CD4-positive, alpha-beta T cell (primary cell): ENCODE measurements at regions of chr1 and their contacts with region 1.

Region 1: GRCh38 chr1:228500901-228501871 is 14.0 kb downstream of the RNF187 start:
- DNase-seq: peak; percentile 78 to 94 (median 83)
- ATAC-seq: peak; percentile 99
- H3K4me3 ChIP-seq: peak overlapping the region; percentile 28
- H3K4me3 Mint-ChIP-seq: peak overlapping the region; percentile 84
- H3K27ac ChIP-seq: no peak overlapping the region
- H3K27ac Mint-ChIP-seq: peak overlapping the region; percentile 55
- H3K4me1 ChIP-seq: peaks cover 19% of the 10 kb centered on the region
- H3K4me1 Mint-ChIP-seq: peaks cover 20% of the 10 kb centered on the region
- H3K27me3 ChIP-seq: peaks cover 0 to 3% of the 10 kb centered on the region in 2 experiments
- H3K27me3 Mint-ChIP-seq: no peaks in the 10 kb centered on the region
- CTCF ChIP-seq: peak; percentile 97

Region 2: GRCh38 chr1:228087771-228088251 is 413.4 kb before region 1 on chr1:
- CTCF ChIA-PET with region 1: no interaction called
- POLR2A ChIA-PET with region 1: no interaction called
- intact Hi-C with region 1: loop called in 1 of 2 experiments (anchors 5 kb)
- DNase-seq: peak in 5 of 14 experiments; percentile 31 to 62 (median 45)
- ATAC-seq: peak; percentile 18
- H3K4me3 ChIP-seq: peak overlapping the region; percentile 5
- H3K4me3 Mint-ChIP-seq: peak overlapping the region; percentile 79
- H3K27ac ChIP-seq: peak overlapping the region in 1 of 2 donors; percentile 45
- H3K27ac Mint-ChIP-seq: peak overlapping the region; percentile 99
- H3K4me1 ChIP-seq: peaks cover 94% of the 10 kb centered on the region
- H3K4me1 Mint-ChIP-seq: peaks cover 96% of the 10 kb centered on the region
- H3K27me3 ChIP-seq: no peaks in the 10 kb centered on the region
- H3K27me3 Mint-ChIP-seq: no peaks in the 10 kb centered on the region
- CTCF ChIP-seq: no peak

Region 3: GRCh38 chr1:228416217-228416933 is 84.8 kb before region 1 on chr1 and contains the start of gene TRIM17:
- CTCF ChIA-PET with region 1: no interaction called
- POLR2A ChIA-PET with region 1: no interaction called
- intact Hi-C with region 1: no loop called
- DNase-seq: peak in 8 of 14 experiments; percentile 10 to 66 (median 45)
- ATAC-seq: peak; percentile 73
- H3K4me3 ChIP-seq: peak within 1 kb of the TSS; percentile 52
- H3K4me3 Mint-ChIP-seq: peak within 1 kb of the TSS; percentile 88
- H3K27ac ChIP-seq: no peak within 1 kb of the TSS
- H3K27ac Mint-ChIP-seq: no peak within 1 kb of the TSS
- H3K4me1 ChIP-seq: peaks cover 22% of the 10 kb centered on the region
- H3K4me1 Mint-ChIP-seq: peaks cover 24% of the 10 kb centered on the region
- H3K27me3 ChIP-seq: peaks cover 6 to 14% of the 10 kb centered on the region in 2 experiments
- H3K27me3 Mint-ChIP-seq: peaks cover 16% of the 10 kb centered on the region
- CTCF ChIP-seq: no peak
- total RNA-seq, gene TRIM17: 0.73 to 0.96 TPM

Region 4: DNA sequence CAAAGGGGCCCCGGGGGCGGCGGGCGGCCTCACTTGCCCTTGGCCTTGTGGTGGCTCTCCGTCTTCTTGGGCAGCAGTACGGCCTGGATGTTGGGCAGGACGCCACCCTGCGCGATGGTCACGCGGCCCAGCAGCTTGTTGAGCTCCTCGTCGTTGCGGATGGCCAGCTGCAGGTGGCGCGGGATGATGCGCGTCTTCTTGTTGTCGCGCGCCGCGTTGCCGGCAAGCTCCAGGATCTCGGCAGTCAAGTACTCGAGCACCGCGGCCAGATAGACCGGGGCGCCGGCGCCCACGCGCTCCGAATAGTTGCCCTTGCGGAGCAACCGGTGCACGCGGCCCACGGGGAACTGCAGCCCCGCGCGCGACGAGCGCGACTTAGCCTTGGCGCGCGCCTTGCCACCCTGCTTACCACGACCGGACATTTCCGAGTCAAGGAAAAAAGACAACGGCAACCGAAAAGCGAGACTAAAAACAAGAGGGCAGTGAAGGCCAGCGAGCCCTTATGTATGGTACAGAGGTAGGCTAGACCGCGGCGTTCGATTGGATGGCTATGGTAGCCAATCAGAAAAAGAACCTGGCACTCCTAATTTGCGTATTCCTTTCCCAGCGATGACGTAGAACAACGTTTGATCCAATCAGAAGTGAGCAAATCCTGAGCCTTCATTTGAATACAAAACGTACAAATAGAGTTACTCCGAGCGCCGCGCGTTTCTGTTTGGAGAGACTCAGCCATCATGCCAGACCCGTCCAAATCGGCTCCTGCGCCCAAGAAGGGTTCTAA is 43.6 kb before region 1 on chr1:
- CTCF ChIA-PET with region 1: interaction called, 6 read pairs
- POLR2A ChIA-PET with region 1: interaction called, 14 read pairs
- intact Hi-C with region 1: loop called in 1 of 2 experiments (anchors 5 kb)
- DNase-seq: peak; percentile 68 to 99 (median 76)
- ATAC-seq: peak; percentile 83
- H3K4me3 ChIP-seq: peak overlapping the region; percentile 67
- H3K4me3 Mint-ChIP-seq: peak overlapping the region; percentile 95
- H3K27ac ChIP-seq: peak overlapping the region; percentile 68 to 94
- H3K27ac Mint-ChIP-seq: peak overlapping the region; percentile 98
- H3K4me1 ChIP-seq: peaks cover 30% of the 10 kb centered on the region
- H3K4me1 Mint-ChIP-seq: peaks cover 54% of the 10 kb centered on the region
- H3K27me3 ChIP-seq: no peaks in the 10 kb centered on the region
- H3K27me3 Mint-ChIP-seq: peaks cover 5% of the 10 kb centered on the region
- CTCF ChIP-seq: no peak

Region 5: GRCh38 chr1:228527596-228527995 is 26.4 kb after region 1 on chr1:
- CTCF ChIA-PET with region 1: no interaction called
- POLR2A ChIA-PET with region 1: no interaction called
- intact Hi-C with region 1: no loop called
- DNase-seq: no peak
- ATAC-seq: no peak
- H3K4me3 ChIP-seq: no peak overlapping the region
- H3K4me3 Mint-ChIP-seq: no peak overlapping the region
- H3K27ac ChIP-seq: no peak overlapping the region
- H3K27ac Mint-ChIP-seq: no peak overlapping the region
- H3K4me1 ChIP-seq: no peaks in the 10 kb centered on the region
- H3K4me1 Mint-ChIP-seq: no peaks in the 10 kb centered on the region
- H3K27me3 ChIP-seq: peaks cover 4 to 11% of the 10 kb centered on the region in 2 experiments
- H3K27me3 Mint-ChIP-seq: peaks cover 73% of the 10 kb centered on the region
- CTCF ChIP-seq: no peak

Region 6: GRCh38 chr1:228684607-228685006 is 183.4 kb after region 1 on chr1:
- CTCF ChIA-PET with region 1: no interaction called
- POLR2A ChIA-PET with region 1: no interaction called
- intact Hi-C with region 1: no loop called
- DNase-seq: no peak
- ATAC-seq: no peak
- H3K4me3 ChIP-seq: no peak overlapping the region
- H3K4me3 Mint-ChIP-seq: no peak overlapping the region
- H3K27ac ChIP-seq: no peak overlapping the region
- H3K27ac Mint-ChIP-seq: no peak overlapping the region
- H3K4me1 ChIP-seq: no peaks in the 10 kb centered on the region
- H3K4me1 Mint-ChIP-seq: no peaks in the 10 kb centered on the region
- H3K27me3 ChIP-seq: peaks cover 4 to 5% of the 10 kb centered on the region in 2 experiments
- H3K27me3 Mint-ChIP-seq: peaks cover 22% of the 10 kb centered on the region
- CTCF ChIP-seq: no peak

Region 7: DNA sequence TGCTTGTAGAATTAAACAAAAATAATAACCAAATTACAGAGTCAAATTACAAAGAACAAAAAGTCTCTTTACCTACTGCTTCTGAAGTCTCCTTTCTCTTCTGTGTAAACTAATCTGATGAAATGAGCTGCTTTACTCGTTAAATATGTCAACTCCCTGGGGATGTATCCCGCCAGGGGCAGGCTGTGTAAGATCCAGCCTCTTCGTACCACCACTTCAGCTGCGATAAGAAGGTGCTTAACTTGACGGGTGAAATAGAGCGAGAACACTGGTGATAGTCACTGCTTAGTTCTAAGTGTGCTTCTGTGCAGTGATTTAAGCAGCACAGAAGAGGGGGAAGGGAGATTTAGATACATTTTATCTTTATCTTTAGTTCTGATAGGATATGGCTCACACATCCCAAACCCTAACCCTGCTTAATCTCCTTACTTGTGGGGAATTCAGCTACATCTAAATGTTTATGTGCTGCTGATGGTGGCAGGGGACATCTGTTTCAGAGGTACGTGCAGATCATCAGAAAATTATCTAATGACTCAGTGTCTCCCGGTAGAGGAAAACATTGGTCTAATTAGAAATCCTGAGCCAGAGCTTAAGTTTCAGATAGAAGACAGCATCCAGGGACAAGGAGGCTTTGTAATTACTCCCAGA is 280.1 kb after region 1 on chr1:
- CTCF ChIA-PET with region 1: no interaction called
- POLR2A ChIA-PET with region 1: no interaction called
- intact Hi-C with region 1: no loop called
- DNase-seq: no peak
- ATAC-seq: no peak
- H3K4me3 ChIP-seq: no peak overlapping the region
- H3K4me3 Mint-ChIP-seq: no peak overlapping the region
- H3K27ac ChIP-seq: no peak overlapping the region
- H3K27ac Mint-ChIP-seq: no peak overlapping the region
- H3K4me1 ChIP-seq: no peaks in the 10 kb centered on the region
- H3K4me1 Mint-ChIP-seq: no peaks in the 10 kb centered on the region
- H3K27me3 ChIP-seq: no peaks in the 10 kb centered on the region
- H3K27me3 Mint-ChIP-seq: no peaks in the 10 kb centered on the region
- CTCF ChIP-seq: no peak

Region 8: DNA sequence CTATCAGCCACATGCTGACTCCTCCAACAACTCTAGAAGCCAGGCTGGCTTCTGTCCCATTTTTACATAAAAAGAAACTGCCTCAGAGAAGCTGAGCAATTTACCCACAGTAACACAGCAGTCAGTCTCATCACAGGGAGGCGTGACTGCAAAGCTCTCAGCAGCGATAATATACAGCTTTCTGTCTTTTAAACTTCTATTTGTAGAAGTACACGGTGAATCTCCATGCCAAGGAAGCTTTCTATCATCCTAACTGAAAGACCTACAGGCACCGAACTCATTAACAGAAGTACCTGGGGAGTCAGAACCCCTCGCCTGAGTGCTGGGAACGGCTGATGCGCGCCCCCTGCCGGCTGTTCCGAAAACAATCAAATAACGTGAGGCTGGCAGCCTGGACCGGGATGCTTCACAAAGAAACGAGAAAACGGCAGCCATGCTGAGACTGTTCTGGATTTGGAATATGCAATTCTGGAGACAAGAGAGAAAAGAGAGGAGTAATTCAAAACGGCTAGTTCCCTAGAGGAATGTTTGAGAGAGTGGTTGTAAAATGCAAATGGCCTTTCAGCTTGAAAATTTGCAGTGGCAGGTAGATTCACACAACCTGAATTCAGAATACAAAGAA is 726.2 kb after region 1 on chr1:
- CTCF ChIA-PET with region 1: no interaction called
- POLR2A ChIA-PET with region 1: no interaction called
- intact Hi-C with region 1: loop called in 1 of 2 experiments (anchors 10 kb)
- DNase-seq: peak; percentile 69 to 90 (median 81)
- ATAC-seq: peak; percentile 84
- H3K4me3 ChIP-seq: no peak overlapping the region
- H3K4me3 Mint-ChIP-seq: no peak overlapping the region
- H3K27ac ChIP-seq: no peak overlapping the region
- H3K27ac Mint-ChIP-seq: no peak overlapping the region
- H3K4me1 ChIP-seq: peaks cover 13% of the 10 kb centered on the region
- H3K4me1 Mint-ChIP-seq: peaks cover 17% of the 10 kb centered on the region
- H3K27me3 ChIP-seq: no peaks in the 10 kb centered on the region
- H3K27me3 Mint-ChIP-seq: no peaks in the 10 kb centered on the region
- CTCF ChIP-seq: peak; percentile 96